Natural killer cell (primary cell): ENCODE measurements at regions of chr3 and their contacts with region 1.

Region 1: DNA sequence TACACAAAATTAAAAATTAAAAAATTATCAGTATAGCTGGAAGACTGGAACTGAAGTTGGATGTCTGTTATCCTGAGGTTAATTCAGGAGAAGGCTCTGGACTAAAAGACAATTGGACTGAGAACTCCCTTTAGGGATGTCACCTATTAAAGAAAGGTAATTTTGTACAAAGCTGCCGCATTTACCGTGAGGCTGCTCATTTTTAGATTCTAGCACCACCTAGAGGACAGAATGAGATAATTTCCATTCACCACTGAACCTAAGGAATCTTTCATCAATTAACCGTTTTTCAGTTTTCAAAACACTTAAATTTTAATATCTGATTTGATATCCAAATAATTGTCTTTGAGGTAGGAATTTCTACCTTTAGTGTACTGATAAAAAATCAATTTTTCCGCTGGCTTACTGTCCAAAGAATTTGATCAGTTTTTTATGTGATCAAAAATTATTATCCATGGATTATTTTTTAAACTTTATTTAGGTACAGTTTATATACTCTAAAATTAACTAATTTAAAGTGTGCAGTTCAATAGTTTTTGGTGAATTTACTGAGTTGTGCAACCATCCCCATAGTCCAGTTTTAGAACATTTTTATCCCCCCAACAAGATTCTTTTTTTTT is 106.7 kb upstream of the TNIK start:
- DNase-seq: peak in 1 of 2 donors; percentile 78
- ATAC-seq: peak; percentile 54 to 70 (median 60)
- H3K4me3 ChIP-seq: no peak overlapping the region
- H3K4me3 Mint-ChIP-seq: no peak overlapping the region
- H3K27ac ChIP-seq: no peak overlapping the region
- H3K27ac Mint-ChIP-seq: no peak overlapping the region
- H3K4me1 ChIP-seq: no peaks in the 10 kb centered on the region
- H3K4me1 Mint-ChIP-seq: peaks cover 0 to 4% of the 10 kb centered on the region in 2 donors
- H3K27me3 ChIP-seq: no peaks in the 10 kb centered on the region
- H3K27me3 Mint-ChIP-seq: peaks cover 19 to 32% of the 10 kb centered on the region in 2 donors
- CTCF ChIP-seq: peak; percentile 93

Region 2: GRCh38 chr3:170076715-170077238 is 1490.1 kb before region 1 on chr3:
- intact Hi-C with region 1: no loop called
- DNase-seq: no peak
- ATAC-seq: no peak
- H3K4me3 ChIP-seq: no peak overlapping the region
- H3K4me3 Mint-ChIP-seq: no peak overlapping the region
- H3K27ac ChIP-seq: no peak overlapping the region
- H3K27ac Mint-ChIP-seq: no peak overlapping the region
- H3K4me1 ChIP-seq: no peaks in the 10 kb centered on the region
- H3K4me1 Mint-ChIP-seq: no peaks in the 10 kb centered on the region
- H3K27me3 ChIP-seq: no peaks in the 10 kb centered on the region
- H3K27me3 Mint-ChIP-seq: no peaks in the 10 kb centered on the region
- CTCF ChIP-seq: no peak

Region 3: GRCh38 chr3:170414202-170414663 is 1152.7 kb before region 1 on chr3:
- intact Hi-C with region 1: loop called (anchors 10 kb)
- DNase-seq: peak in 1 of 2 donors; percentile 69
- ATAC-seq: peak; percentile 70 to 78 (median 76)
- H3K4me3 ChIP-seq: no peak overlapping the region
- H3K4me3 Mint-ChIP-seq: no peak overlapping the region
- H3K27ac ChIP-seq: no peak overlapping the region
- H3K27ac Mint-ChIP-seq: no peak overlapping the region
- H3K4me1 ChIP-seq: peaks cover 9% of the 10 kb centered on the region
- H3K4me1 Mint-ChIP-seq: peaks cover 0 to 6% of the 10 kb centered on the region in 2 donors
- H3K27me3 ChIP-seq: peaks cover 5% of the 10 kb centered on the region
- H3K27me3 Mint-ChIP-seq: peaks cover 22 to 27% of the 10 kb centered on the region in 2 donors
- CTCF ChIP-seq: peak; percentile 94

Region 4: DNA sequence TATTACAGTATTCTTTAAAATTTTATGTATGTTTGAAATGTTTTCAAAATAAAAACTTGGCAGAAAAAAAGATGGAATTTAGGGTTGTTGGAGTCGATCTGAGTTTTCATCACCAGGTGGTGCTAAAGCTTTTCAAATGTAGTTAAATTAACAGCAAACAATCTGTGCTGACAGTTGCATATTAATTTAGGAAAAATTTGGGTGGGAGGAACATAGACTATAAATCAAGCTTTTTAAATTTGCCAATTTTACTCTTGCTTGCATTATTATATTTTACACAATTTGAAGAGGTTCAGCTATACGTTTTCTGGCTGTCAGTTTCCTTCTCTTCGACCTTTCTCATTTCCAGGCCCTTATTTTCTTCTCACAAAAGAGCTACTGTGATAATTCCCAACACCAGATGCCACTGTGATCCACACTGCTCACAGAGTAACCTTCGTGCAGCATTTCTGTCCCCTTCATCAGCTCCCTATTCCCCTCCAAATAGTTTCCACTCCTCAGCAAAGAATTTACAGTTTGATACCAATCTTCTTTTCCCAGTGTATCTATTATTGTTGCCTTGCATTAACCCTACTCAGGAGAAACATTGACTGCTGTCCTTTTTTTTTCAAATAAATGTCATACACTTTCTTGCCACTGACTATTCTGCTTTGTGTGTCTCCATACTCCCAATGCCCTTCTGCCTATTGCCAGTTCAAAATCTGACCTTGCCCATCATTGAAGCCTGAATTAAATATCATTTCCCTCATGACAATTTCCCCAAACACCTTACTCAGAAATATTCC is 605.1 kb before region 1 on chr3:
- intact Hi-C with region 1: loop called (anchors 2 kb)
- DNase-seq: peak in 1 of 2 donors; percentile 52
- ATAC-seq: no peak
- H3K4me3 ChIP-seq: no peak overlapping the region
- H3K4me3 Mint-ChIP-seq: no peak overlapping the region
- H3K27ac ChIP-seq: no peak overlapping the region
- H3K27ac Mint-ChIP-seq: no peak overlapping the region
- H3K4me1 ChIP-seq: no peaks in the 10 kb centered on the region
- H3K4me1 Mint-ChIP-seq: peaks cover 0 to 10% of the 10 kb centered on the region in 2 donors
- H3K27me3 ChIP-seq: peaks cover 2% of the 10 kb centered on the region
- H3K27me3 Mint-ChIP-seq: peaks cover 3 to 8% of the 10 kb centered on the region in 2 donors
- CTCF ChIP-seq: peak; percentile 64

Region 5: GRCh38 chr3:171049861-171050444 is 517.0 kb before region 1 on chr3:
- intact Hi-C with region 1: loop called (anchors 1 kb)
- DNase-seq: peak in 1 of 2 donors; percentile 57
- ATAC-seq: peak; percentile 49 to 79 (median 66)
- H3K4me3 ChIP-seq: no peak overlapping the region
- H3K4me3 Mint-ChIP-seq: no peak overlapping the region
- H3K27ac ChIP-seq: no peak overlapping the region
- H3K27ac Mint-ChIP-seq: no peak overlapping the region
- H3K4me1 ChIP-seq: no peaks in the 10 kb centered on the region
- H3K4me1 Mint-ChIP-seq: no peaks in the 10 kb centered on the region
- H3K27me3 ChIP-seq: no peaks in the 10 kb centered on the region
- H3K27me3 Mint-ChIP-seq: peaks cover 8 to 13% of the 10 kb centered on the region in 2 donors
- CTCF ChIP-seq: peak; percentile 31

Region 6: DNA sequence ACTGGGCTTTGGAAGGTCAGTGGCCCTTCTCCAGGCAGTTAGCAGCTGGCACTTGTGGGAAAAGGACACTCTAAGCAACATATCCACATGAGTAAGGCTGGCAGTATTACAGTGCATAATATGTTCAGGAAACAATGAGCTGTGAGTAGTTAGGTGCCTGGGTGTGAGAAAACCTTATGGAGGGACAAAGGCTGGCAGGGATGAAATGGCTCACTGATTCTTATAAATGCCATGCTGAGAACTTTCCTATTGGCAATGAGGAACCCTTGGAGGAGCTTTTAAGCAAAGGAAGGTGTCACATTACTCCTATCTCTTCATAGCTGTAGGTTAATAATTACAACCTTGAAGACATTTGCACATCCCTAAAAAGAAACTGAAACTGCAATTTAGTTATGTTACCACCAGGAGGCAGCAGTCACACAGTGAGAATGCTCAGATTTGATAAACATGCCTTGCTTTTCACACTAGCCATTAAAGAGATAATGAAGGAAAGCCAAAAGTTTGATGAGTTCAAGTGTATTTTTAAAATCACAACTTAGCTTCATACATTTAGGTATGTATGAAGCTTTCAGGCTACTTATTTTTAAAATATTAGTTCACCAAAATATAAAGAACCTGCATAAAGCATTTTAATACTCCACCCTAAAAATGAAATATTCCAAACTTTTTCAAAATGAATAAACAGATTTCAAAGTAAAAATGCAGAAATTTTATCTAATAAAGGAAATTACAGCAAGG is 403.8 kb before region 1 on chr3:
- intact Hi-C with region 1: loop called (anchors 1 kb)
- DNase-seq: peak in 1 of 2 donors; percentile 67
- ATAC-seq: peak in 1 of 3 donors; percentile 35
- H3K4me3 ChIP-seq: no peak overlapping the region
- H3K4me3 Mint-ChIP-seq: no peak overlapping the region
- H3K27ac ChIP-seq: no peak overlapping the region
- H3K27ac Mint-ChIP-seq: peak overlapping the region in 1 of 2 donors; percentile 60
- H3K4me1 ChIP-seq: no peaks in the 10 kb centered on the region
- H3K4me1 Mint-ChIP-seq: peaks cover 15 to 17% of the 10 kb centered on the region in 2 donors
- H3K27me3 ChIP-seq: no peaks in the 10 kb centered on the region
- H3K27me3 Mint-ChIP-seq: no peaks in the 10 kb centered on the region
- CTCF ChIP-seq: peak; percentile 72

Region 7: GRCh38 chr3:171187706-171188290 is 379.1 kb before region 1 on chr3:
- intact Hi-C with region 1: loop called (anchors 1 kb)
- DNase-seq: peak in 1 of 2 donors; percentile 65
- ATAC-seq: peak in 2 of 3 donors; percentile 64 to 66
- H3K4me3 ChIP-seq: no peak overlapping the region
- H3K4me3 Mint-ChIP-seq: no peak overlapping the region
- H3K27ac ChIP-seq: no peak overlapping the region
- H3K27ac Mint-ChIP-seq: no peak overlapping the region
- H3K4me1 ChIP-seq: no peaks in the 10 kb centered on the region
- H3K4me1 Mint-ChIP-seq: peaks cover 11 to 14% of the 10 kb centered on the region in 2 donors
- H3K27me3 ChIP-seq: no peaks in the 10 kb centered on the region
- H3K27me3 Mint-ChIP-seq: no peaks in the 10 kb centered on the region
- CTCF ChIP-seq: peak; percentile 61

Region 8: GRCh38 chr3:171328419-171329082 is 238.4 kb before region 1 on chr3:
- intact Hi-C with region 1: loop called (anchors 5 kb)
- DNase-seq: peak; percentile 31 to 78
- ATAC-seq: peak; percentile 88 to 96 (median 92)
- H3K4me3 ChIP-seq: no peak overlapping the region
- H3K4me3 Mint-ChIP-seq: peak overlapping the region; percentile 73
- H3K27ac ChIP-seq: no peak overlapping the region
- H3K27ac Mint-ChIP-seq: peak overlapping the region; percentile 58 to 64
- H3K4me1 ChIP-seq: peaks cover 16% of the 10 kb centered on the region
- H3K4me1 Mint-ChIP-seq: peaks cover 61 to 69% of the 10 kb centered on the region in 2 donors
- H3K27me3 ChIP-seq: no peaks in the 10 kb centered on the region
- H3K27me3 Mint-ChIP-seq: no peaks in the 10 kb centered on the region
- CTCF ChIP-seq: peak; percentile 8